T-cell (primary cell): ENCODE measurements at regions of chr17 and their contacts with region 1.

Region 1: GRCh38 chr17:49763735-49764558 is at the start of gene FAM117A:
- DNase-seq: peak; percentile 86 to 99 (median 97)
- ATAC-seq: peak; percentile 86 to 93 (median 91)
- H3K4me3 ChIP-seq: peak within 1 kb of the TSS; percentile 68 to 94
- H3K4me3 Mint-ChIP-seq: peak within 1 kb of the TSS; percentile 92 to 96 (median 96)
- H3K27ac ChIP-seq: peak within 1 kb of the TSS; percentile 66
- H3K27ac Mint-ChIP-seq: peak within 1 kb of the TSS; percentile 91 to 93
- H3K4me1 ChIP-seq: peaks cover 25 to 44% of the 10 kb centered on the region in 2 experiments
- H3K4me1 Mint-ChIP-seq: peaks cover 45 to 56% (median 52%) of the 10 kb centered on the region in 3 donors
- H3K27me3 ChIP-seq: no peaks in the 10 kb centered on the region
- H3K27me3 Mint-ChIP-seq: no peaks in the 10 kb centered on the region
- total RNA-seq, gene FAM117A: 71.9 to 105 (median 99.1) TPM

Region 2: GRCh38 chr17:48254896-48255295 is 1509.1 kb before region 1 on chr17:
- CTCF ChIA-PET with region 1: no interaction called
- POLR2A ChIA-PET with region 1: interaction called in 1 of 2 experiments, 10 read pairs
- DNase-seq: no peak
- ATAC-seq: no peak
- H3K4me3 ChIP-seq: no peak overlapping the region
- H3K4me3 Mint-ChIP-seq: no peak overlapping the region
- H3K27ac ChIP-seq: no peak overlapping the region
- H3K27ac Mint-ChIP-seq: peak overlapping the region in 1 of 2 donors; percentile 45
- H3K4me1 ChIP-seq: no peaks in the 10 kb centered on the region
- H3K4me1 Mint-ChIP-seq: peaks cover 0 to 7% (median 4%) of the 10 kb centered on the region in 3 donors
- H3K27me3 ChIP-seq: no peaks in the 10 kb centered on the region
- H3K27me3 Mint-ChIP-seq: no peaks in the 10 kb centered on the region

Region 3: DNA sequence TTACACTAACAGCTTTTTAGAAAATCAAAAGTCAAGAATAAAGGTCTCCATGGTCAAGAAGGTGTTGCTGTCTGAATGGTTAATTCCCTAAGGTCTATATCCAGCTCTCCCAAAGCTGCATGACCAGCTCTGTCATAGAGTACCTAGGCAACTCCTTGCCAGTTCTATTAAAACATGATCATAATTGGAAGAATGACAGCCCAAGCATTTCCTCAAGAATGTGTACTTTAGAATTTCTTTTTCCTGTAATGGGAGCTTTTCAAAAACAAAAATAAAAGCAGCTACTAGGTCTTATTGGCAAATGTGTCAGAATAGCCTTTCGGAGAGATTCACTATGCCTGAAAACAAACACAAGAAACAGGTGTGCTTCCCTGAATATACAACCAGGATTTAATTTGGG is 93.9 kb before region 1 on chr17:
- CTCF ChIA-PET with region 1: no interaction called
- POLR2A ChIA-PET with region 1: no interaction called
- DNase-seq: no peak
- ATAC-seq: no peak
- H3K4me3 ChIP-seq: no peak overlapping the region
- H3K4me3 Mint-ChIP-seq: no peak overlapping the region
- H3K27ac ChIP-seq: no peak overlapping the region
- H3K27ac Mint-ChIP-seq: peak overlapping the region in 1 of 2 donors; percentile 28
- H3K4me1 ChIP-seq: peaks cover 12 to 24% of the 10 kb centered on the region in 2 experiments
- H3K4me1 Mint-ChIP-seq: peaks cover 62 to 64% (median 63%) of the 10 kb centered on the region in 3 donors
- H3K27me3 ChIP-seq: no peaks in the 10 kb centered on the region
- H3K27me3 Mint-ChIP-seq: no peaks in the 10 kb centered on the region

Region 4: DNA sequence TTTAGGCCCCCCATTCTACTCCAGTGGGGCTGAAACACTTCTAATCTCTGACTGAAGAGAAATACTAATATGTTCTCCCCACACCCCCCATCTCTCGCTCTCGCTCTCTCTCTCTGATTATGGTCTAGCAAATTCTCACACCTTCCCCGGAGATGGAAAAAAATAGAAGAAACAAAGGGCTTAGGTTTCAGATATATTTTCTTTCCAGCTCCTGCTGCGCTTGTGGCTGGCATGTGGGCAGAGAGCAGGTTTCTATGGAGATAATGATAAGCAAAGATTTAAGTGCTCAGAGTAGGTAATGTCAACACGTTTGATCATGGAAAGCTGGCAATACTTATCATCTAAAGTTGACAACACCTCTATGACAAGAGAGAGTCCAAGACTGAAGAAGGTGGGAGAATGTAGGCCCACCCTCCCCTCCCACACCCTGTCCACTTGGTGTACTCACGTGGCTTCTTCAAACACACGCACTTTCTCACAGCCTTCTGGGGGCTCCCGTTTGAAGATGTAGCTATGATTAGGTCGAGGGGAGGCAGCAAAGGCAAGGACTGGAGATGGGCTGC is 48.1 kb before region 1 on chr17:
- CTCF ChIA-PET with region 1: interaction called, 3 to 21 read pairs
- POLR2A ChIA-PET with region 1: interaction called, 5 to 60 read pairs
- DNase-seq: peak in 30 of 35 experiments; percentile 18 to 82 (median 45)
- ATAC-seq: peak; percentile 32 to 80 (median 46)
- H3K4me3 ChIP-seq: no peak overlapping the region
- H3K4me3 Mint-ChIP-seq: peak overlapping the region; percentile 1 to 50 (median 26)
- H3K27ac ChIP-seq: peak overlapping the region; percentile 92
- H3K27ac Mint-ChIP-seq: peak overlapping the region; percentile 91 to 93
- H3K4me1 ChIP-seq: peaks cover 0 to 52% of the 10 kb centered on the region in 2 experiments
- H3K4me1 Mint-ChIP-seq: peaks cover 28 to 51% (median 40%) of the 10 kb centered on the region in 3 donors
- H3K27me3 ChIP-seq: no peaks in the 10 kb centered on the region
- H3K27me3 Mint-ChIP-seq: no peaks in the 10 kb centered on the region

Region 5: DNA sequence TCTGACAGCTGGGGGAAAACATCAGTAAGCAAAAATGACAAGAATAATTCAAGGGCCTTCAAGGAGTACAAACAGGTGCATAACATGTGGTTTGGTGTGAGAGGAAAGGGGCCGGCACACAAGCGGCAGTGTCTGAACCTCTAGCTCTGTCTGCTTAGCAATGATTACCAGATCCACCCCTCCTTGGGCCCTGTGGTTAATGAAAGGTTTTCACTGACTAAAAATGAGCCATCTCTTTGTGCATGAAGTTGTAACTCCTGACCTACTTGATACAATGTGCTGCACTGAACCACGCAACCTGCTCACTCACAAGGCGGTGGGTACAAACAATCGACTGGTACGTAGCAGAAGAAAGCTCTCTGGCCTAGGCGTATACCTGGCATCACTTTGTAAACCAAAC is 15.2 kb before region 1 on chr17:
- CTCF ChIA-PET with region 1: interaction called in 1 of 2 experiments, 10 read pairs
- POLR2A ChIA-PET with region 1: interaction called, 10 to 117 read pairs
- DNase-seq: peak in 34 of 35 experiments; percentile 19 to 78 (median 56)
- ATAC-seq: peak; percentile 70 to 78 (median 74)
- H3K4me3 ChIP-seq: no peak overlapping the region
- H3K4me3 Mint-ChIP-seq: peak overlapping the region; percentile 50 to 64 (median 63)
- H3K27ac ChIP-seq: peak overlapping the region; percentile 97
- H3K27ac Mint-ChIP-seq: peak overlapping the region; percentile 96 to 98
- H3K4me1 ChIP-seq: peaks cover 53 to 89% of the 10 kb centered on the region in 2 experiments
- H3K4me1 Mint-ChIP-seq: peaks cover 62 to 90% (median 89%) of the 10 kb centered on the region in 3 donors
- H3K27me3 ChIP-seq: no peaks in the 10 kb centered on the region
- H3K27me3 Mint-ChIP-seq: no peaks in the 10 kb centered on the region

Region 6: DNA sequence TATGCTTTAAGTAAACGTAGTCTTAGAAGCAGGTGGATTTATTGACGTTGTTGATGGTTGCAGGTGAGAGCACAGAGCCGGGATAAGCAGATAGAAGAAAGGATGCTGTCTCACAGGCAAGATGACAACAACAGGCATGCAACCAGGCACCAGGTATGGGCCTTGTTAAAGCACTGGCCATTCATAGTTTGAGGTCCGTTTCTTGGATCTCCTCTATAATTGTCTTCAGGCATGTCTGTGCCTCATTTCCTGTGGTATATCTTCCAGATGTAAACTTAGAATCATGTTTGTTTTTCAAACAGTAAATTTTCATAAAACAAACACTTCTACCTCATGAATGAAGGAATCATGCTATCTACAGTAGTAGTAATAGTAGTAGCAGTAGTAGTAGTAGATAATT is 45.1 kb after region 1 on chr17:
- CTCF ChIA-PET with region 1: no interaction called
- POLR2A ChIA-PET with region 1: interaction called in 1 of 2 experiments, 11 read pairs
- DNase-seq: no peak
- ATAC-seq: no peak
- H3K4me3 ChIP-seq: no peak overlapping the region
- H3K4me3 Mint-ChIP-seq: no peak overlapping the region
- H3K27ac ChIP-seq: no peak overlapping the region
- H3K27ac Mint-ChIP-seq: peak overlapping the region in 1 of 2 donors; percentile 7
- H3K4me1 ChIP-seq: peaks cover 0 to under 1% of the 10 kb centered on the region in 2 experiments
- H3K4me1 Mint-ChIP-seq: peaks cover 43 to 53% (median 51%) of the 10 kb centered on the region in 3 donors
- H3K27me3 ChIP-seq: no peaks in the 10 kb centered on the region
- H3K27me3 Mint-ChIP-seq: no peaks in the 10 kb centered on the region

Region 7: DNA sequence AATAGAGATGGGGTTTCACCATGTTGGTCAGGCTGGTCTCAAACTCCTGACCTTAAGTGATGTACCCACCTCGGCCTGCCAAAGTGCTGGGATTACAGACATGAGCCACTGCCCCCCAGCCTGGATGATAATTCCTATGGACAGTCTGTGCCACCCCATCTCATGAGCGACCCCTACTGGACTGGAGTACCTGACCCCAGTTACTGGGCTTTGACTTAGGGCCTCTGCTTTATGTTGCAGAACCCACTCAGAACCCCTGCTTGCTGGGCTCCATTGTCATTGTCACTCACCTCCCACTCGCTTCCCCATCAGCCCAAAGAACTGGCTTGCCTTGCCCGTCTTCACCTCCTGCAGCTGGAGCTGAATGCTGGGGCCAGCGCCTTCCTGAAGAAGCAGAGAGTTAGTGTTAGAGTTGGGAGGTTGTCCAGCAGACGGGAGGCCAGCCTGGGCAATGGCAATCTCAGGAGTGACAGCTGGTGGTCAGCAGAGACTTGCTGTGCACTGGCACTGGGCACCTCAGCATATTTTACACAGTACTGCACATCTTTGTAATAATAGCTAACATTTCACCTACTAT is 79.9 kb after region 1 on chr17:
- CTCF ChIA-PET with region 1: no interaction called
- POLR2A ChIA-PET with region 1: no interaction called
- DNase-seq: peak in 3 of 35 experiments; percentile 7 to 45 (median 12)
- ATAC-seq: no peak
- H3K4me3 ChIP-seq: no peak overlapping the region
- H3K4me3 Mint-ChIP-seq: no peak overlapping the region
- H3K27ac ChIP-seq: no peak overlapping the region
- H3K27ac Mint-ChIP-seq: peak overlapping the region in 1 of 2 donors; percentile 68
- H3K4me1 ChIP-seq: peaks cover 0 to 13% of the 10 kb centered on the region in 2 experiments
- H3K4me1 Mint-ChIP-seq: peaks cover 8 to 16% (median 12%) of the 10 kb centered on the region in 3 donors
- H3K27me3 ChIP-seq: no peaks in the 10 kb centered on the region
- H3K27me3 Mint-ChIP-seq: no peaks in the 10 kb centered on the region

Region 8: GRCh38 chr17:50114849-50115357 is 351.0 kb after region 1 on chr17:
- CTCF ChIA-PET with region 1: no interaction called
- POLR2A ChIA-PET with region 1: no interaction called
- DNase-seq: peak in 17 of 35 experiments; percentile 19 to 65 (median 30)
- ATAC-seq: peak in 1 of 4 experiments; percentile 36
- H3K4me3 ChIP-seq: no peak overlapping the region
- H3K4me3 Mint-ChIP-seq: peak overlapping the region in 1 of 3 donors; percentile 48
- H3K27ac ChIP-seq: no peak overlapping the region
- H3K27ac Mint-ChIP-seq: no peak overlapping the region
- H3K4me1 ChIP-seq: peaks cover 0 to 12% of the 10 kb centered on the region in 2 experiments
- H3K4me1 Mint-ChIP-seq: peaks cover 8 to 14% (median 10%) of the 10 kb centered on the region in 3 donors
- H3K27me3 ChIP-seq: peaks cover 0 to 54% of the 10 kb centered on the region in 2 experiments
- H3K27me3 Mint-ChIP-seq: peaks cover 23 to 42% of the 10 kb centered on the region in 2 donors